ENCODE measurements at regions of chr2 and their contacts with region 1.

Region 1: DNA sequence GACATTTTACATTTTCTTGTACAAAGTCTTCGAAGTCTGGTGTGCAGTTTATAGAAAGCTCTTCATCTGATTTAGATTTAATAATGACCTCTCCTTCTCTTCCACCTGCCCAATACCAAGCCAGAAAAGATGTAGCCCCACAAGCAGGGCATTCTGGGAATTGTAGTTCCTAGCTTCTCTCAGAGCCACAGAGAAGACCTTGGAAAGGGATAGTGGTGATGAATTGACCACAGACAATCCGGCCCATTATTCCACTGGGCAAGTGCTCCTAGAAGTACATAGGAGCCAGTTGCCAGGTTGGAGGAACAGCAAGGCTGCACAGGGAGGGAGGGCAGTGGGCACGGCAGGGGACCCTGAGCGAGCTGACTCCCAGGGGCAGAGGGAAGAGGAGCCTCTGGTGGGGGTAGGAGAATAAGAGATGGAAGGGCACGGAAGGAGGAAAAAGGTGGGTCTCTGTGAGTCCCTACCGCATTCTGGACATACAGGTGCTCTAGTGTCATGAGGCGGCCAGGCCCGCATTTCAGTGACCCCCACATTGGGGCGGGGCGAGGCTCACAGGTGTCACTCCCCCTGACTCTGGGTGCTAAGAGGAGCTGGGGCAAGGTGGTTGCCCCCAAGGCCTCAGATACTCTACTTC is 152.5 kb upstream of the HAAO start:
- DNase-seq: peak in 1 of 3 donors; percentile 2
- H3K4me3 ChIP-seq: no peak overlapping the region
- H3K27ac ChIP-seq: peak overlapping the region in 1 of 2 experiments; percentile 2
- H3K4me1 ChIP-seq: peaks cover 7 to 68% (median 57%) of the 10 kb centered on the region in 4 experiments
- H3K27me3 ChIP-seq: no peaks in the 10 kb centered on the region

Region 2: GRCh38 chr2:42859006-42859552 is 85.8 kb before region 1 on chr2:
- CTCF ChIA-PET with region 1: interaction called, 75 read pairs
- POLR2A ChIA-PET with region 1: no interaction called
- DNase-seq: peak; percentile 84 to 93 (median 89)
- H3K4me3 ChIP-seq: no peak overlapping the region
- H3K27ac ChIP-seq: no peak overlapping the region
- H3K4me1 ChIP-seq: peaks cover 2 to 57% (median 45%) of the 10 kb centered on the region in 4 experiments
- H3K27me3 ChIP-seq: no peaks in the 10 kb centered on the region

Region 3: GRCh38 chr2:42964439-42965083 is 19.7 kb after region 1 on chr2:
- CTCF ChIA-PET with region 1: interaction called, 87 read pairs
- POLR2A ChIA-PET with region 1: interaction called, 62 read pairs
- DNase-seq: peak in 2 of 3 donors; percentile 65 to 69
- H3K4me3 ChIP-seq: peak overlapping the region in 2 of 7 experiments; percentile 35 to 58
- H3K27ac ChIP-seq: peak overlapping the region; percentile 88 to 91
- H3K4me1 ChIP-seq: peaks cover 35 to 99% (median 95%) of the 10 kb centered on the region in 4 experiments
- H3K27me3 ChIP-seq: no peaks in the 10 kb centered on the region

Region 4: GRCh38 chr2:43131024-43131889 is 186.4 kb after region 1 on chr2:
- CTCF ChIA-PET with region 1: interaction called, 18 read pairs
- POLR2A ChIA-PET with region 1: no interaction called
- DNase-seq: peak; percentile 94 to 100 (median 98)
- H3K4me3 ChIP-seq: peak overlapping the region in 2 of 7 experiments; percentile 4 to 40
- H3K27ac ChIP-seq: peak overlapping the region; percentile 51 to 71
- H3K4me1 ChIP-seq: peaks cover 31 to 91% (median 88%) of the 10 kb centered on the region in 4 experiments
- H3K27me3 ChIP-seq: no peaks in the 10 kb centered on the region

Region 5: DNA sequence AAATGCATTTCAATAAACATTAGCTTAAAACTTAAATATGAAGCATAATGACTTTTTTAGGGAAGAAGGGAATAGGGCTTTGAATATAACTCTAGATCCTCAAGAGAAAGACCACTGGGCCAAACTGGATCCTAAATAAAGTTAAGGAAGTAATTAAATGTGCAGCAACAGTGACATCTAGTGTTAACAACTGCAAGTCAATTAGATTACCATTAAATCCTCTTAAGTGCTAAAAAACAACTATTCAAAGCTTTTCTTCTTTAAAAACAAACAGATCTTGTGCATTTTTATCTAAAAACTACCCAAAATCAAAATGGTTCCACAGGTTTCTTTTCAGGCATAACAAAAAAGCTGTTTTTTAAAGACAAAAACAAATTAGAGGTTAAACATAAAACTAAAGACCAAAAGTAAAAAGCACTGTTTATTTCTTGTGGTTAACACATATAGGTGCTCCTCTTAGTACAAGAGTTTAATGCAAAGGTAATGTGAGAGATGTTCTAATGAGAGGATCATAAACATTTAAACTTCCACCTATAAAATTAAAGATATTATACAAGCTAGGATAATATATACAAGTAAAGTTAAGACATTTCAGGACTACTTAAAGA is 539.5 kb after region 1 on chr2:
- CTCF ChIA-PET with region 1: interaction called, 46 read pairs
- POLR2A ChIA-PET with region 1: no interaction called
- DNase-seq: peak; percentile 89 to 92 (median 91)
- H3K4me3 ChIP-seq: no peak overlapping the region
- H3K27ac ChIP-seq: no peak overlapping the region
- H3K4me1 ChIP-seq: peaks cover 8 to 29% (median 12%) of the 10 kb centered on the region in 4 experiments
- H3K27me3 ChIP-seq: no peaks in the 10 kb centered on the region

Measured in common myeloid progenitor, CD34-positive (primary cell).